ENCODE measurements at regions of chr10 and their contacts with region 1.

Region 1: DNA sequence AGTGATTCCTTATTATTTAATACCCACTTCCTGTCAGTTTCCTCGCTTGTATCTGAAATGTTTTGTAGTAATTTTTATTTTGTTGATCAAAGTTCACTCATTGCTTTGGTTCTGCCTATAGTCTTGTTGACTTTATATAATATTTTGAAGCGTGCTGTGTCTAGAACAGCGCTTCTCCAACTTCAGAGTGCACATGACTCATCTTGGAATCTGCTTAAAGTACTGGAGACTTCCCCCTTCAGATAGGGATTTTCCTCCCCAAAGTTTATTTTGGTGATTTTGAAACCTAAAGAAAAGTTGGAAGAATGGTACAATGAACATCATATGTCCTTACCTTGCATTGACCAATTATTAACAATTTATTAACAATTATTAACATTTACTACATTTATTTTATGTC is 5.8 kb downstream of the COMTD1 start:
- DNase-seq: no peak
- ATAC-seq: no peak
- H3K4me3 ChIP-seq: no peak overlapping the region
- H3K27ac ChIP-seq: peak overlapping the region in 3 of 12 donors; percentile 21 to 84 (median 47)
- H3K4me1 ChIP-seq: peaks cover 20 to 71% (median 53%) of the 10 kb centered on the region in 12 donors
- H3K27me3 ChIP-seq: no peaks in the 10 kb centered on the region
- CTCF ChIP-seq: no peak
- POLR2A ChIP-seq: no peak

Region 2: DNA sequence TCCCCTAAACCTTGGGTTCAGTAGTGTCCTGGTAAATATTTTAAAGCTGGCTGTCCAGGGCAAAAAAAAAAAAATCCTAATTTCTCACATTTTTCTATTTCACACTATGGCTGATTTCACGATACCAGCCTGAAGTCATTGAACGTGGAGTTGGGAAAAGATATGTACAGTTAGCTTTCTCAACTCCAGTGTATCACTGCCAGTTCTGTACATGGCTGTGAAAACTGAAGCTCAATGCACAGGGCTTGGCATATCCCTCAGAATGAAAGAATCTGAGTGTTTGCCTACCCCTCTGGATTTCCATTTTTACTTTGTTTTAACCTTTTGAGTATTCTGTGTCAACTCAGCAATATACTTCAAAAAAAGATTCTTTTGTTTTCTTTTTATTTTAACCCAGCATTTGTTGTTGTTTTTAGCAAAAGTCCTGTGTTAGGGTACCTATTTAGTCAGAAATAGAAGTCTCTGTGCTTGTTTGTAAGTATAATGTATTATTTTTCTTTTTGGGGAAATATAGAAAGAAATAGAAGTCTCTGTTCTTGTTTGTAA is 804.4 kb before region 1 on chr10:
- intact Hi-C with region 1: no loop called
- DNase-seq: no peak
- ATAC-seq: no peak
- H3K4me3 ChIP-seq: no peak overlapping the region
- H3K27ac ChIP-seq: no peak overlapping the region
- H3K4me1 ChIP-seq: no peaks in the 10 kb centered on the region
- H3K27me3 ChIP-seq: no peaks in the 10 kb centered on the region
- CTCF ChIP-seq: no peak
- POLR2A ChIP-seq: no peak

Region 3: DNA sequence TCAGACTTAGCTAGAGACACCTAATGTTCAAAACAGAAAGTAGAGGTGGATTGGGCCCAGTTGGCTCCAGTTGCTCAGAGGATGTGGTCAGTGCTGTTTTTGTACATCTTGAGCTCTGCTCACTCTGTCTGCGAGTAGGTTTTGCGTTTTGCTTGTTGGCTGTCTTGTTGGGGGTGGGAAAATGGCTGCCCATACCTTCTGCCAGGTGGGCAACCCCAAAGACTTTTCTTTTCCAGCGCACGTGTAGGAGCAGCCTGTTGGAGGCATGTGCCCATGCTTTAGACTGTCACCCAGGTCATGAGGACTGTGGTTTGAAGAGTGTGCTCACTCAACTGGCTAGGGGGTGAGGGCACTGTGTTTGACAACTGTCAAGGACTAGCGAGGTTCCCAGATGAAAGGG is 329.7 kb before region 1 on chr10:
- intact Hi-C with region 1: loop called in 1 of 10 experiments (anchors 10 kb)
- DNase-seq: no peak
- ATAC-seq: peak in 1 of 4 donors; percentile 18
- H3K4me3 ChIP-seq: no peak overlapping the region
- H3K27ac ChIP-seq: no peak overlapping the region
- H3K4me1 ChIP-seq: peaks cover 3 to 55% (median 40%) of the 10 kb centered on the region in 12 donors
- H3K27me3 ChIP-seq: no peaks in the 10 kb centered on the region
- CTCF ChIP-seq: no peak
- POLR2A ChIP-seq: no peak

Region 4: GRCh38 chr10:75283671-75284470 is 53.9 kb after region 1 on chr10:
- intact Hi-C with region 1: no loop called
- DNase-seq: peak in 1 of 5 donors; percentile 50
- ATAC-seq: peak; percentile 67 to 82 (median 70)
- H3K4me3 ChIP-seq: peak overlapping the region in 7 of 12 donors; percentile 27 to 47 (median 37)
- H3K27ac ChIP-seq: peak overlapping the region in 9 of 12 donors; percentile 24 to 74 (median 66)
- H3K4me1 ChIP-seq: peaks cover 0 to 15% (median 7%) of the 10 kb centered on the region in 12 donors
- H3K27me3 ChIP-seq: no peaks in the 10 kb centered on the region
- CTCF ChIP-seq: no peak
- POLR2A ChIP-seq: no peak

Region 5: GRCh38 chr10:75312440-75312839 is 82.5 kb after region 1 on chr10:
- intact Hi-C with region 1: no loop called
- DNase-seq: no peak
- ATAC-seq: no peak
- H3K4me3 ChIP-seq: no peak overlapping the region
- H3K27ac ChIP-seq: no peak overlapping the region
- H3K4me1 ChIP-seq: no peaks in the 10 kb centered on the region
- H3K27me3 ChIP-seq: no peaks in the 10 kb centered on the region
- CTCF ChIP-seq: no peak
- POLR2A ChIP-seq: no peak

Region 6: GRCh38 chr10:75972491-75973276 is 742.7 kb after region 1 on chr10:
- intact Hi-C with region 1: no loop called
- DNase-seq: no peak
- ATAC-seq: peak in 3 of 4 donors; percentile 38 to 60 (median 57)
- H3K4me3 ChIP-seq: no peak overlapping the region
- H3K27ac ChIP-seq: peak overlapping the region in 8 of 12 donors; percentile 3 to 70 (median 38)
- H3K4me1 ChIP-seq: peaks cover 0 to 21% (median 6%) of the 10 kb centered on the region in 12 donors
- H3K27me3 ChIP-seq: no peaks in the 10 kb centered on the region
- CTCF ChIP-seq: no peak
- POLR2A ChIP-seq: no peak

Measured in heart left ventricle (tissue), 16 donors.